ENCODE measurements at regions of chr3 and their contacts with region 1.

Region 1: GRCh38 chr3:170324962-170325361 is 32.6 kb upstream of the SKIL start:
- DNase-seq: no peak
- ATAC-seq: no peak
- H3K4me3 ChIP-seq: no peak overlapping the region
- H3K4me3 Mint-ChIP-seq: no peak overlapping the region
- H3K27ac ChIP-seq: no peak overlapping the region
- H3K27ac Mint-ChIP-seq: no peak overlapping the region
- H3K4me1 ChIP-seq: no peaks in the 10 kb centered on the region
- H3K4me1 Mint-ChIP-seq: no peaks in the 10 kb centered on the region
- H3K27me3 ChIP-seq: no peaks in the 10 kb centered on the region
- H3K27me3 Mint-ChIP-seq: peaks cover 0 to 3% of the 10 kb centered on the region in 2 donors

Region 2: DNA sequence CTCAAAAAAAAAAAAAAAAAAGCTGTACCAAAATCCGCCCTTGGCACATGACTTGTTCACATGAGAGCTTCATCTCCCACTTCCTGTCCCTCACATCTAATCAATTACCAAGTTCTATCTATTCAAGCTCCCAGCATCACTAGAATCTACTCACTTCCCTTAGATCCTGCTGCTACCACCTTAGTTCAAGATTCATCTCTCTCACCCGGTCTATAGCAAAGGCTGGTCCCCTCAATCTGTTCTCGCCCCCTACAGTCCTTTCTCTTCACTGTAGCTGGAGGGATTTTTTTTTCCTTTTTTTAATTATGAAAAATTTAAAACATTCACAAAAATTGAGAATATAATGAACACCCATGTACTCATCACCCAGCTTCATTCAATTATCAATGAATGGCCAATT is 303.9 kb before region 1 on chr3:
- CTCF ChIA-PET with region 1: no interaction called
- POLR2A ChIA-PET with region 1: no interaction called
- DNase-seq: peak in 2 of 35 experiments; percentile 6 to 22
- ATAC-seq: peak; percentile 33 to 70 (median 49)
- H3K4me3 ChIP-seq: no peak overlapping the region
- H3K4me3 Mint-ChIP-seq: peak overlapping the region in 1 of 3 donors; percentile 15
- H3K27ac ChIP-seq: no peak overlapping the region
- H3K27ac Mint-ChIP-seq: peak overlapping the region; percentile 4 to 27
- H3K4me1 ChIP-seq: peaks cover 0 to 2% of the 10 kb centered on the region in 2 experiments
- H3K4me1 Mint-ChIP-seq: peaks cover 16 to 22% (median 18%) of the 10 kb centered on the region in 3 donors
- H3K27me3 ChIP-seq: no peaks in the 10 kb centered on the region
- H3K27me3 Mint-ChIP-seq: peaks cover 0 to 8% of the 10 kb centered on the region in 2 donors

Region 3: GRCh38 chr3:170267793-170268192 is 57.2 kb before region 1 on chr3:
- CTCF ChIA-PET with region 1: no interaction called
- POLR2A ChIA-PET with region 1: interaction called in 1 of 2 experiments, 12 read pairs
- DNase-seq: no peak
- ATAC-seq: no peak
- H3K4me3 ChIP-seq: no peak overlapping the region
- H3K4me3 Mint-ChIP-seq: no peak overlapping the region
- H3K27ac ChIP-seq: no peak overlapping the region
- H3K27ac Mint-ChIP-seq: no peak overlapping the region
- H3K4me1 ChIP-seq: no peaks in the 10 kb centered on the region
- H3K4me1 Mint-ChIP-seq: no peaks in the 10 kb centered on the region
- H3K27me3 ChIP-seq: no peaks in the 10 kb centered on the region
- H3K27me3 Mint-ChIP-seq: no peaks in the 10 kb centered on the region